IMR-90 (cell line): ENCODE measurements at regions of chr13 and their contacts with region 1.

Region 1: GRCh38 chr13:101127741-101128353 is 288.5 kb downstream of the NALCN start:
- DNase-seq: peak; percentile 53
- ATAC-seq: peak; percentile 91
- H3K4me3 ChIP-seq: no peak overlapping the region
- H3K27ac ChIP-seq: no peak overlapping the region
- H3K4me1 ChIP-seq: no peaks in the 10 kb centered on the region
- H3K27me3 ChIP-seq: no peaks in the 10 kb centered on the region
- CTCF ChIP-seq: peak; percentile 81
- POLR2A ChIP-seq: no peak
- RAD21 ChIP-seq: peak; percentile 78

Region 2: DNA sequence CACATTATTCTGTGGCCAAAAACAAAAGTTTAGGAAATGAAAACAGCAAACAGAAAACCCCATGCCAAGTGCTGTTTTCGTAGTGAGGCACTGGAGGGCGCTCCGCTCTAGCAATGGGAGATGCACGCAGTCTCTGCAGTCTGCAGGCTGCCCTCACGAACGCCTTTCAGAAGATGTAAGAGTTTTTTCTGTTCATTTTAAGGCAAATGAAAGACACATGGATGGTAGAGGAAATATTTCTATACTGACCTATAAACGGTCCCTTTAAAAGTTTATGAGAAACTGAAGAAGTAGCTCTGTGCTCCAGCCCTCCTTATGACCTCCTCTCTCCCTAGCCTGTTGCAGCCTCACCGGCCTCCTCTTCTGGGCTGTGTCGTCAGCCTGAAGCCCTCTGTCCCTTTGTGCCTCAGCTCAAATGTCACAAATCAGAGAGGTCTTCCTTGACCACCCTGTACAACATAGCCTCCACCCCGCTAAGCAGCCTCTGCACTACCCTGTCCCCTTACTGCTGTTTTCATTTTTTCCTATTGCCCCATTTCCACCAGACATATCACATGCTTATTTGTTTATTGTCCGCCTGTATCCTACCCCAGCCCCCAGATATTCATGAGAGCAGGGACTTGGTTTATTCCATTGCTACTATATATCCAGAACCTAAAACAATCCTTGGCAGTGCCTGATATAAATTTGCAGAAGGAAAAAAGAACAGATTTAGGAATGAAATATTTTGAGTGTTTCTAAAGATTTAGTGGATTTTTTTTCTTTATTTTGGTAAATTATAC is 1510.2 kb before region 1 on chr13:
- CTCF ChIA-PET with region 1: no interaction called
- POLR2A ChIA-PET with region 1: no interaction called
- dilution Hi-C with region 1: no loop called
- in situ Hi-C with region 1: no loop called
- intact Hi-C with region 1: loop called (anchors 1 kb)
- DNase-seq: peak; percentile 38
- ATAC-seq: peak; percentile 92
- H3K4me3 ChIP-seq: no peak overlapping the region
- H3K27ac ChIP-seq: no peak overlapping the region
- H3K4me1 ChIP-seq: no peaks in the 10 kb centered on the region
- H3K27me3 ChIP-seq: peaks cover 24% of the 10 kb centered on the region
- CTCF ChIP-seq: peak; percentile 62
- POLR2A ChIP-seq: no peak
- RAD21 ChIP-seq: peak; percentile 68

Region 3: GRCh38 chr13:100573121-100573520 is 554.7 kb before region 1 on chr13:
- CTCF ChIA-PET with region 1: interaction called, 3 read pairs
- POLR2A ChIA-PET with region 1: no interaction called
- dilution Hi-C with region 1: no loop called
- in situ Hi-C with region 1: loop called (anchors 10 kb)
- intact Hi-C with region 1: loop called (anchors 2 kb)
- DNase-seq: peak; percentile 82
- ATAC-seq: peak; percentile 90
- H3K4me3 ChIP-seq: no peak overlapping the region
- H3K27ac ChIP-seq: no peak overlapping the region
- H3K4me1 ChIP-seq: no peaks in the 10 kb centered on the region
- H3K27me3 ChIP-seq: no peaks in the 10 kb centered on the region
- CTCF ChIP-seq: peak; percentile 70
- POLR2A ChIP-seq: no peak
- RAD21 ChIP-seq: peak; percentile 63

Region 4: DNA sequence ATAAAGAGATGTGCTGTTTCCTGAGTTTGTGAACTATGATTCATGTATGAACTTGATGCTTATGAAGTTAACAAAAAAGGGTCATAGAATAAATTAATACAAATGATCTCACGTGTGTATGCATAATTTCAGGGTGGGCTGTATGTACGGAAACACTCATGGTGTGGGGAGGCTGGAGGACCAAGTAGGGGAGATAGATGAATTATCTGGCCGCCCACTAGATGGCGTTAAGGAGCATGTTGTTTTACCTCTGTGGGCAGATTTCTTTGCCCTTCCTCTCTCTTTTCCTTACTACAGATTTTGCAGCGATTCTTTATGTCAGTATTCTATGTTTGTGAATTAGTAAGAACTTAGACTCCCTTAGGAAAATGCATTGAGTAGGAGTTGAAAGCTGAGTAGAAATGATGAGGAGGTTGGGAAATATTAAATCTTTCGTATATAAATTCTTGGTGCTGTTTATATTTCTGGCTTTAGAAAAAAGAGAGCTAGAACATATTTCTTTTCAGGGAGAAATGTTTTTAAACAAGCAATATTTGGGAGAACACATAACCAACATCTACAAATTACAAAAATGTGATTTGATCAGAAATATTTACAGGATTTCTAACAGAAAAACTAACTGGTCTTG is 405.8 kb before region 1 on chr13:
- CTCF ChIA-PET with region 1: interaction called, 4 read pairs
- POLR2A ChIA-PET with region 1: no interaction called
- dilution Hi-C with region 1: no loop called
- in situ Hi-C with region 1: loop called (anchors 10 kb)
- intact Hi-C with region 1: loop called (anchors 1 kb)
- DNase-seq: peak; percentile 50
- ATAC-seq: peak; percentile 93
- H3K4me3 ChIP-seq: no peak overlapping the region
- H3K27ac ChIP-seq: no peak overlapping the region
- H3K4me1 ChIP-seq: no peaks in the 10 kb centered on the region
- H3K27me3 ChIP-seq: peaks cover 3% of the 10 kb centered on the region
- CTCF ChIP-seq: peak; percentile 78
- POLR2A ChIP-seq: no peak
- RAD21 ChIP-seq: peak; percentile 65

Region 5: GRCh38 chr13:101049166-101049850 is 78.5 kb before region 1 on chr13:
- CTCF ChIA-PET with region 1: no interaction called
- POLR2A ChIA-PET with region 1: no interaction called
- dilution Hi-C with region 1: no loop called
- in situ Hi-C with region 1: no loop called
- intact Hi-C with region 1: no loop called
- DNase-seq: no peak
- ATAC-seq: no peak
- H3K4me3 ChIP-seq: no peak overlapping the region
- H3K27ac ChIP-seq: no peak overlapping the region
- H3K4me1 ChIP-seq: peaks cover 4% of the 10 kb centered on the region; the same call in 1 of the 2 replicates
- H3K27me3 ChIP-seq: no peaks in the 10 kb centered on the region
- CTCF ChIP-seq: no peak
- POLR2A ChIP-seq: no peak
- RAD21 ChIP-seq: no peak

Region 6: DNA sequence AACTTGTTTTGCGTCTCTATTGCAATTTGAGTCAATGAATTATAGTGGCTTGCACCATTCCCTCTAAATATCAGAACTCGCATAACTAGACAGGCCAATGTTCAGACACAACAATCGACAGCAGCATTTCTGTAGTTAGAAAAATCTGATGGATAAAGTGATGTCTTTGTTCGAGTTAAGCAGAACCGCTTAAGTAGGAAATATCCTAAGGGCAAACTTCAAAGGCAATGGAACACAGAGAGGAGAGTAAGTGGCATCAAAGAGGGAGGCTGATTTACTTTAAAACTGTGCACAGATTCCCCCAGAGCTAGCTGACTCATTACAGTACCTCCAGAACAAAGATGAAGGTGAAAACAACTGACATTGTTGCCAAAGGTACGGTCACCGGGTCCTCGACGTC is 45.4 kb before region 1 on chr13:
- CTCF ChIA-PET with region 1: no interaction called
- POLR2A ChIA-PET with region 1: no interaction called
- dilution Hi-C with region 1: no loop called
- in situ Hi-C with region 1: no loop called
- intact Hi-C with region 1: no loop called
- DNase-seq: no peak
- ATAC-seq: no peak
- H3K4me3 ChIP-seq: no peak overlapping the region
- H3K27ac ChIP-seq: no peak overlapping the region
- H3K4me1 ChIP-seq: no peaks in the 10 kb centered on the region
- H3K27me3 ChIP-seq: no peaks in the 10 kb centered on the region
- CTCF ChIP-seq: no peak
- POLR2A ChIP-seq: no peak
- RAD21 ChIP-seq: no peak

Region 7: DNA sequence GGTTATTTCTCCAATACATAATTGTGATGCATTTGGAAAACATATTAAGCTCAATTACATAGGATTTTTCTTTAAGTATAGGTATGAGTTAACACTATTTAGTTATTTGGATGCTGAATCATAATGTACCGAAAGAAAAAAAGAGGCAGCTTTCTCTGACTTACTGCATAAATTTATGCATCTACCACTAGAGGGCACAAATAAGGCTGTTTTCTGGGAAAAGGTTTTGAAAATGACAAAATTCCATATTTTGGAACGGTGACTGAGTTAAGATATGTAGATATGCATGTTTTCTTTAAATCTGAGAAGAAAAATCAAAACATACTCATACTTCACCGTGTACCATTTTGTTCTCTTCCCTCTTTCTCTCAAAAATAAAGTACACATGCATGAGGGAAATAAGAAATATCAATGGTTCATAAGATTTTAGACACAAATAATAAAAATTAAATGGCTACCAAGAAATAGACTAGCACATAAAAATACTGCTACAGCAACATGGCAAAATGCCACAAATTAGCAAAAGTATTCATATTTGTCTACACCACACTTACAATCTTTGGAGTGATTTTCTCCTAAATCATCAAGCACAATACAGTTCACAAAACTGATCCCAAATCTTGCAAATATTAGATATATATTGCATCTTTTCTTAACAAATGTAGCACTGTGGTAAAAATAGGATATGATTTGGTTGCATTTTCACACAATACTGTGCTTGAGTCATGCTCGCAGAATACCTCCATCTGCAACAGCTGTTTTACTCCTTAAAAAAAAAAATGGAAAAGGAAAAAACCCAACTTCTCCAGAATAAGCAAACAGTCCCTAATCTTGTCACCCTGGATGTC is 1014.0 kb after region 1 on chr13:
- CTCF ChIA-PET with region 1: no interaction called
- POLR2A ChIA-PET with region 1: no interaction called
- dilution Hi-C with region 1: no loop called
- in situ Hi-C with region 1: loop called (anchors 25 kb)
- intact Hi-C with region 1: no loop called
- DNase-seq: peak; percentile 35
- ATAC-seq: peak; percentile 53
- H3K4me3 ChIP-seq: no peak overlapping the region
- H3K27ac ChIP-seq: no peak overlapping the region
- H3K4me1 ChIP-seq: no peaks in the 10 kb centered on the region
- H3K27me3 ChIP-seq: no peaks in the 10 kb centered on the region
- CTCF ChIP-seq: peak; percentile 72
- POLR2A ChIP-seq: no peak
- RAD21 ChIP-seq: peak; percentile 59